ENCODE measurements at regions of chrX and their contacts with region 1.

Region 1: GRCh38 chrX:6311540-6311939 is 82.9 kb upstream of the NLGN4X start:
- DNase-seq: no peak
- ATAC-seq: peak; percentile 71
- H3K4me3 ChIP-seq: no peak overlapping the region
- H3K27ac ChIP-seq: no peak overlapping the region
- H3K4me1 ChIP-seq: no peaks in the 10 kb centered on the region
- H3K27me3 ChIP-seq: no peaks in the 10 kb centered on the region
- CTCF ChIP-seq: no peak
- EP300 ChIP-seq: no peak
- POLR2A ChIP-seq: no peak
- RAD21 ChIP-seq: no peak

Region 2: DNA sequence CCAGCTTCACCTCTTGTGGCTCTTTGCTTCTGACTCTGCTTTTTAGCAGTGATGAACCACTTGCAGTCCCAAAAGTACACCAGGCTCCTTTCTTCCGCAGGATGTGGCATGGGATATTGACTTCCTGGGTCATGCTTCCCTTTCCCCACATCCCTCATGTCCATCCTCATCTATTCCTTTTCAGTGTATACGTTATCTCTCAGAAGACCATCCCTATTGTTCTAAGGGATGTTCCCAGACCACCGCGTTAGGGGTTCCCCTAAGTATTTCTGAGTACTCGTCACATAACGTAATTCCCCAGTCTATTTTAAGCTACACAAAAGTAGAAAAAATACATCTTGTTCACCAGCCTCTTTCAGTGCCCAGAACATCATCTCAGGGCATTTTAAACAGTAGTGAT is 11.8 kb before region 1 on chrX:
- CTCF ChIA-PET with region 1: interaction called, 4 read pairs
- POLR2A ChIA-PET with region 1: interaction called, 7 read pairs
- RAD21 ChIA-PET with region 1: interaction called, 7 read pairs
- SMC1A ChIA-PET with region 1: interaction called, 23 read pairs
- in situ Hi-C with region 1: no loop called
- intact Hi-C with region 1: no loop called
- DNase-seq: no peak
- ATAC-seq: peak; percentile 76
- H3K4me3 ChIP-seq: no peak overlapping the region
- H3K27ac ChIP-seq: no peak overlapping the region
- H3K4me1 ChIP-seq: no peaks in the 10 kb centered on the region
- H3K27me3 ChIP-seq: no peaks in the 10 kb centered on the region
- CTCF ChIP-seq: no peak
- EP300 ChIP-seq: no peak
- POLR2A ChIP-seq: no peak
- RAD21 ChIP-seq: no peak